CD14-positive monocyte (primary cell): ENCODE measurements at regions of chr10 and their contacts with region 1.

Region 1: DNA sequence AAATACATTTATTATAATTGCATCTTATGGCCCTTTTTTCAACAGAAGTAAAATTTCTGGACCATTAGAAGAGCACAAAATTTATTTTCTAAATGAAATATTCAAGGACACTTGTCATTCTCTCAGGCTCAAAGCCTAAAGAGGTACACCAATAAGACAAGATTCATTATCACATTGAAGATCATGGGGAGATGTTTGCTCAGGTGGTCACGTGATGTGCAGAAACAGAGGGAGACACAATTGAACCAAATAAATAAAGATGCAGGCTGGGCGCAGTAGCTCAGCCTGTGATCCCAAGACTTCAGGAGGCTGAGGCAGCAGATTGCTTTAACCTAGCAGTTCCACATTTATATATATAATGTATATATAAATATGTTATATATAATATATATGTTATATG is 53.2 kb upstream of the TMEM254 start:
- DNase-seq: no peak
- H3K4me3 ChIP-seq: no peak overlapping the region
- H3K4me3 Mint-ChIP-seq: no peak overlapping the region
- H3K27ac ChIP-seq: no peak overlapping the region
- H3K27ac Mint-ChIP-seq: no peak overlapping the region
- H3K4me1 ChIP-seq: no peaks in the 10 kb centered on the region
- H3K4me1 Mint-ChIP-seq: no peaks in the 10 kb centered on the region
- H3K27me3 ChIP-seq: no peaks in the 10 kb centered on the region
- H3K27me3 Mint-ChIP-seq: peaks cover 0 to 7% (median 0%) of the 10 kb centered on the region in 3 donors
- CTCF ChIP-seq: no peak

Region 2: DNA sequence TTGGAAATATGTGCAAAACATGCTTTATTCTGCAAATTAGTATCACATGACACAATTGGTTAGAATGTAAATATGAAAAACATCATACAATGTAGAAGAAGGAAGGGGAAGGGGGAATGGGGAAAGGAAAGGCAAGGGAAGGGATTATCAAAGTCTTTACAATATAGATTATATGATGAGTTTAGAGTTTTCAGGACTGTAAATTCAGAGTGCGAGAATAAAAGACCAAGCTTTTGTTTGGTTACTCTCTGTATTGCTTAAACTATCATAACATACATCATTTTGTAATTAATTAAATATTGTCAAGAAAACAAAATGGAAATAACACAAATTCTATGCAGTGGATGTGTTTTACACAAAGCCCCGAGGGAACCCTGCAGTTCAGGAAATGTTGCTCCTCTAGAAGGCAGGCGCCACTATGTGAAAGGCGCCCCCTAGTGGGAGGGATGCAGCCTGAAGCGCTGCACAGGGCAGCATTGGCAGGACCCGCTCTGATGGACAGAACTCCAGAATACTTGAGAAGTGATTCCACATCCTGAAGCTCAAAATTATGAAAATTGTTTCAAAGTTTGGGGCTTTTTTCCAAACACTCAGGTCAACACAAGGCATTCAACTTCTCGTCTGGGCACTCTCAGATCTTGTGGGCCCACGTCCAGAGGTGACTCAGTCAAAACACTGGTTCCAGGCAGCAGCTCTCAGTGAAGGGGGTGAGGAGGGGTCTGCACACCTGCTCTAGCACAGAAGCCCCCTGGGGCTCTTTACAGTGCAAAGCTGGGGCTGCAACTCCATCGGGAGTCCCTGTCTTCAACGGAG is 21.6 kb after region 1 on chr10:
- intact Hi-C with region 1: loop called in 1 of 2 experiments (anchors 1 kb)
- DNase-seq: peak; percentile 51 to 62 (median 57)
- H3K4me3 ChIP-seq: no peak overlapping the region
- H3K4me3 Mint-ChIP-seq: no peak overlapping the region
- H3K27ac ChIP-seq: no peak overlapping the region
- H3K27ac Mint-ChIP-seq: peak overlapping the region in 1 of 7 donors; percentile 33
- H3K4me1 ChIP-seq: no peaks in the 10 kb centered on the region
- H3K4me1 Mint-ChIP-seq: no peaks in the 10 kb centered on the region
- H3K27me3 ChIP-seq: no peaks in the 10 kb centered on the region
- H3K27me3 Mint-ChIP-seq: peaks cover 0 to 1% (median 1%) of the 10 kb centered on the region in 3 donors
- CTCF ChIP-seq: peak; percentile 94

Region 3: DNA sequence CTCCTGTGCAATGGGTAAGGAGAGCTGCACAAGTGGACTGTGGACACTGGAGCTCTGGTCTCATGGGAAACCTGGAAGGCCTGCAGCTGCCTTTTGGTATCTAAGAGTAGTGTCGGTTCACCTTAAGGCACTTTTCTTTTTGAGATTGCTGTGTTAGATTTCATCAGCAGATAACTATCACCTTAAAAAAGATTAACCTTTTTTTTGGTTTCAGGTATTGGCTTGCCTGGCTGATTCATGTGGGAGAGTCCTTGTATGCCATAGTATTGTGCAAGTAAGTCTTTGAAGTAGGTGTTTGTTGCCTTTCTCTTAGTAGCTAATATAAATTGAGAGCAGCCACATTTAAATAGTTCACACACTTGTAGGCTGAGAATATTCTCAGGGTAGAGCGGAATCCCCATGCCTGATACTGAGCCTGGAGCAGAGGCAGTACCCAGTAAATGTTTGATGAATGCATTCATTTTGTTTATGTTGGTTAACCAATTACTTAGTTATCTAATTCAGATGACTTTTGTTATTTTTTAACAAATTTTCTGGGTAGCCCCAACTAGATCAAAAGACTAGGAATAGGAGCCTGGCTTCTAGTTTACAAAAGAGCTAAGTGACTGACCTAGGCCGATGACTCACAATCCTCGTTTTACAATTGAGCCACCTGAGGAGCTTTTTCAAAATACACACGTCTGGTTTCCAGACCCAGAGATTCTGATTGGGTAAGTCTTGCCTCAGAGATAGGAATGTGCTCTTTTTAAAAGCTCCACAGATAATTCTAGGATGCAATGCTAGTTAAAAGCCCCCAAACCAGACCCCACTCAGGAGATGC is 56.9 kb after region 1 on chr10:
- intact Hi-C with region 1: no loop called
- DNase-seq: no peak
- H3K4me3 ChIP-seq: no peak overlapping the region
- H3K4me3 Mint-ChIP-seq: no peak overlapping the region
- H3K27ac ChIP-seq: no peak overlapping the region
- H3K27ac Mint-ChIP-seq: no peak overlapping the region
- H3K4me1 ChIP-seq: peaks cover 13 to 16% of the 10 kb centered on the region in 2 donors
- H3K4me1 Mint-ChIP-seq: peaks cover 15% of the 10 kb centered on the region
- H3K27me3 ChIP-seq: no peaks in the 10 kb centered on the region
- H3K27me3 Mint-ChIP-seq: no peaks in the 10 kb centered on the region
- CTCF ChIP-seq: no peak